ENCODE measurements at regions of chr17 and their contacts with region 1.

Region 1: DNA sequence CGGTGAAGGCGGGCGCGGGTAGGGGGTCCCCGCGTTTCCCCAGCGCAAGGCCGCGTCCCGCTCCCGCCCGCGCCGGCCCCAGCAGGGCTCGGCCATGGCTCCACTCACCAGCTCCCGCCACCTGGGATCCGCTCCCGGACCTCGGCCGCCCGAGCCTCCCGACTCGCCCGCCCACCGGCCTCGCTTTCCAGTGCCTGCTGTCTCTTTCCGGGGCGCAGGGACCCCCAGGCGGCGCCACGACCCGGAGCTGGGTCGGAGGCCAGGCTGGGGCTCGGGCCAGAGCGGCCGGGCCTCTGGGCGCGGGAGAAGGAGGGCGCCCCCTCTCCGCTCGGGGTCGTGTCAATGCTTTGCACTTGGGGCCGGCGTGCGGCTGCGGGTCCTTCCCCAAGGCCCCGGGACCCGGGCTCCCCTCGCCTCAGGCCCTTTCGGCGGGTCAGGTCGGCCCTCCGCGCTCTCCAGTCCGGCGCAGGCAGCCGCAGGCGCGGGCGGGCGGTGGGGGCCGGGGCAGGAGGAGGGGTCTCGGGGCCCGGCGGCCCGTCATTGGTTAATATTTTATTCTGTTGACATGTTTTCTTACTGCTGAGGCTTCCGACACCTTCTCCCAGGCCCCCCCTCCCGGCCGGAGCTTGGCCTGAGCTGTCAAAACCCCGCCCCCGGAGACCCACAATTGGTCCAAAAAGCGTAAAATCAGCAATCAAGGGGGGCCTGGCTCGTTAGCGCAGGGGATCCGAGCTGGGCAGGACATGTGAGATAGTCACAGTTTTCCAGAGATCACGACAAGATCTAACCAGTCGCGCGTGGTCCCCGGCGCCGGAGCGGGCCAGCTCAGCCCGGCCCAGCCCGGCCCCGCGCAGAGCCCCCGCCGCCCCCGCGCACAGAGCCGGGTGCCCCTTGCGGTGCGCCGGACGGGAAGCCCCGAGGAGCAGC is at the start of gene TBX2:
- DNase-seq: peak; percentile 85
- ATAC-seq: peak; percentile 68
- H3K4me3 ChIP-seq: peak within 1 kb of the TSS; percentile 72
- H3K27ac ChIP-seq: no peak within 1 kb of the TSS
- H3K4me1 ChIP-seq: peaks cover 20% of the 10 kb centered on the region
- H3K27me3 ChIP-seq: no peaks in the 10 kb centered on the region
- CTCF ChIP-seq: 0 out of 2 replicates have a peak, but pooled peaks have one; percentile 12
- total RNA-seq, gene TBX2: 7.1 and 8.5 TPM in 2 replicates

Region 2: DNA sequence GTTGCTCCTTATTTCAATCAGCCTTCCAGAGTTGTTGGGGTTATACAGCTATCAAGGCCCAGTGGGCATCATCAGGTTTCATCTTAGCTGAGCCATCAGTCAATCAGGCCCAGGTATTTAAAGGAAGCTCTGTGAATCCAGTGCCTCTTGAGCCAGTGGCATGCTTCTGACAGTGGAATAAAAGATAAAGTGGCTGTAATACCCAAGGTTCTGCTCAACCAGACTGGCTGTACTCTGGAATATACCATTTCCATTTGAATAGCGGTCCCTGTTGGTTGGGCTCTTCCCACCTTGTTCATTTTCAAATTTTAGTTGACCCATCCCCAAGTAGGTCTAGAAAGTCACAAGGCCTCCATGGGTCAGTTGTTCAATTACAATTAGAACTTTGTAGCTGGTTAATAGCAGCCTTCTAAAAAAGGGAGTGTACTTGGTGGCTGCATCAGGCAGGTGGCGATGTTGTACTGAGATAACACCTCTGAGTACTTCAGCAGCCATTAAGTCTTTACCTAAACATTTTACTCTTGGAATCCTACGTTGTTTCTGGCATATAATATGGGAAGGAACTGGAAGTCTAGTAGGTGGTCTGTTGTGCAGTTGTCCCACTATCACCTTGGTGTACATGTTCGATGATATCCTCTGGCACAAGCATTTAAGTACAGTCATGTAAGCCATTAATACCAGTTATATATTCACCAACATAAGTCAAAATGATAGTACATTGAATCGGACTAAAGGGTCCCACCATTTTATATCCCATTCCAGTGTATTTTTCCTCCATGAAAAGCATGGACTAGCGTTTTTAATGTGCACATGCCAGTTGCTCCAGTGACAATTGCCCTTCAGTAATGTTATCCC is 427.7 kb before region 1 on chr17:
- CTCF ChIA-PET with region 1: no interaction called
- POLR2A ChIA-PET with region 1: no interaction called
- intact Hi-C with region 1: loop called (anchors 2 kb)
- DNase-seq: peak; percentile 76
- ATAC-seq: peak; percentile 97
- H3K4me3 ChIP-seq: no peak overlapping the region
- H3K27ac ChIP-seq: no peak overlapping the region
- H3K4me1 ChIP-seq: no peaks in the 10 kb centered on the region
- H3K27me3 ChIP-seq: no peaks in the 10 kb centered on the region
- CTCF ChIP-seq: peak; percentile 97

Region 3: DNA sequence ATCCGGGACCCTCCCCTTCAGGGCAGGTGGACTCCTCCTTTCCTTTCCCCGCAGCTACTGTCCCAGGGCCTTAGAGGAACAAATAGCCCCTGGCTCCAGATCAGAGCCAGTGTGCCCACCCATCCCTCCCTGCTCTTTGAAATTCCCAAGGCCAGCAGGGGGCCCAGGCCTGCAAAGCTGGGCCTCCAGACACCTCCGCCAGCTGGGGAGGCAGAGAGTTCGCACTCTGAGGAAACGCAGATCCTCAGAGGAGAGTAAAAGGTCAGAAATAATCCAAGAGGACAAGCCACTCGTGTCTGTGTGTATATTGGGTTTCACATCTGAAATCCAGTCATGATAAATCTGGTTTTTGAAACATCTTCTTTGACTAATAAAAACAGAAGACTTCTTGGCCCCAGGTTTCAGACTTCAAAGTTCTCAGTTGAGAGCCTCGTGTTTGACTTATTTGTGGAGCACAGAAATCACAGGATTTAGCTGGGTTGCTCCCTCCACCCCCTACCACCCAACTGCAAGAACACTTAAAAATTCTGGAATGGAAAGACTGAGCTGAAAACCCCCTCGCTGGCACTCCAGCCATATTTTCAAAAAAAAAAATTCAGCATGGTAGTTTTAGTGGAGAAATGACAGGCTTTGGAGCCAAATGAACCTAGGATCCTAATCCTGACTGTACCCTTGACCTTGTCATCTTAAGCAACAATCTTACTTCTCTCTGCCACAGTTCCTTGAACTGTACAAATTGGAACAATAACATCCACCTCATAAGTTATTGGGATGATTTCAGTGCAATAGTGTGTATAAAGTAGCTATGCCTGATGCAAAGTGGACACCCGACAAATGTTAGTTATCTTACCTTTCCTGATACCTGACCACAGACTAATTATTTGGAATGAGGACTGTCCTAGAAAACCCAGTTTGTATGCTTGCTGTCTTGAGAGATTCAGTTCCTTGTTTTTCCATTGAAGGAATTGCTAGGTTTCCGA is 44.2 kb before region 1 on chr17:
- CTCF ChIA-PET with region 1: interaction called, 6 read pairs
- POLR2A ChIA-PET with region 1: no interaction called
- intact Hi-C with region 1: loop called (anchors 5 kb)
- DNase-seq: no peak
- ATAC-seq: no peak
- H3K4me3 ChIP-seq: no peak overlapping the region
- H3K27ac ChIP-seq: peak overlapping the region; percentile 93
- H3K4me1 ChIP-seq: peaks cover 18% of the 10 kb centered on the region
- H3K27me3 ChIP-seq: no peaks in the 10 kb centered on the region
- CTCF ChIP-seq: no peak

Region 4: DNA sequence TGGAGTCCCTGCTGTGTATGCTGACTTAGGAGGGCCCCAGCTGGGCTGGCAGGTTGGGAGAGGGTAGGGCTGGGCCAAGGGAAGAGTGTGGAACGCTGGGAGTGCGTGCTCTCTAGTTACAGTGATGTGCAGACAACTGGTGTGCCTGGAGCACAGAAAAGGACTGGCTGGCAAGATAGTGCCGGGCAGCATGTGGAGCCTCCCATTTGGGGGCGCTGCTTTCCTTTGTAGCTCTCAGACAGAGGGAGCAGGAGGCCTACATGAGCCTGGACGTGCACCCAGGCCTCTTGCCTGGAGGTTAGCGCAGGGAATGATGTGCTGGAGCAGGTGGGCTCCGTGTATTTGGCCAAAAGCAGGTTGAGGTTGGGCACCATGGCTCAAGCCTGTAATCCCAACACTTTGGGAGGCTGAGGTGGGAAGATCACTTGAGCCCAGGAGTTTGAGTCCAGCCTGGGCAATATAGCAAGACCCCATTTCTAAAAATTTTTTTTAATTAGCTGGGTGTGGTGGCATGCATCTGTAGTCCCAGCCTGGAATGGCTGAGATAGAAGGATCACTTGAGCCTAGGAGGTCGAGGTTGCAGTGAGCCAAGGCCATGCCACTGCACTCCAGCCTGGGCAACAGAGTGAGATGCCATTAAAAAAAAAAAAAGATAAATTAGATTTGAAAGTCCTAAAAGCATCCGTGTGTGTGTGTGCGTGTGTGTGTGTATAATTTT is 26.8 kb after region 1 on chr17:
- CTCF ChIA-PET with region 1: no interaction called
- POLR2A ChIA-PET with region 1: no interaction called
- intact Hi-C with region 1: no loop called
- DNase-seq: peak; percentile 60
- ATAC-seq: peak; percentile 37
- H3K4me3 ChIP-seq: no peak overlapping the region
- H3K27ac ChIP-seq: peak overlapping the region; percentile 61
- H3K4me1 ChIP-seq: peaks cover 22% of the 10 kb centered on the region
- H3K27me3 ChIP-seq: no peaks in the 10 kb centered on the region
- CTCF ChIP-seq: peak; percentile 58

Region 5: GRCh38 chr17:61770752-61771533 is 371.5 kb after region 1 on chr17:
- CTCF ChIA-PET with region 1: no interaction called
- POLR2A ChIA-PET with region 1: no interaction called
- intact Hi-C with region 1: no loop called
- DNase-seq: no peak
- ATAC-seq: no peak
- H3K4me3 ChIP-seq: no peak overlapping the region
- H3K27ac ChIP-seq: no peak overlapping the region
- H3K4me1 ChIP-seq: peaks cover 12% of the 10 kb centered on the region
- H3K27me3 ChIP-seq: no peaks in the 10 kb centered on the region
- CTCF ChIP-seq: no peak